GM10248 (cell line): ENCODE measurements at regions of chrX and their contacts with region 1.

Region 1: GRCh38 chrX:119488749-119489148 is 20.5 kb downstream of the SLC25A5 start:
- DNase-seq: peak; percentile 34
- CTCF ChIP-seq: peak; percentile 44

Region 2: GRCh38 chrX:119468930-119469635 is 19.7 kb before region 1 on chrX:
- CTCF ChIA-PET with region 1: interaction called, 14 read pairs
- POLR2A ChIA-PET with region 1: no interaction called
- DNase-seq: peak; percentile 79
- CTCF ChIP-seq: peak; percentile 78

Region 3: DNA sequence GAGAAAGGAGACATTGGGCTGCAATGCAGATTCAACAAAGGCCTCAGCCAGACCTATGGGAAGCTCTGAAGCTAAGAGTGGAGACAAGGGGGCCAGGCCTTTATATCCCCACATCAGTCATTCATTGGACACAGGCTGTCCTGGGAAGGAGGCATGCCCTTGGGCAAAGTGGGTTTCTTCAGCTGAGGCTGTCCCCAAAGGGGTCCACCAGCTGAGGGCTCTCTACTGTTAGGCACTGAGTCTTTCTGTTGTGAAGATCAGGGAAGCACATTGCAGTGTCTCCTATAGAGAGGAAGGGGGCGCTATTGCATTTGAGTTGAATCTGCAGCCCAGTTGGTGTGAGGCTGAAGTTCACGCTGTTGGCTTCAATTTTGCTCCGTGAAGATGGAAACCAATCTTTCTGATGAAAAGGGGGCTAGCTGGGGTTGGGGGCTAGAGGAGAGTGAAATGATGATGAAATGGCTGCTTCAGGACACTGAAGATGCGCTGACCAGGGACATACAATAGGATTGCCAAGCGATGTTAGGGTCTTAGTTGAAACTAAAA is 27.5 kb after region 1 on chrX:
- CTCF ChIA-PET with region 1: interaction called, 12 read pairs
- POLR2A ChIA-PET with region 1: no interaction called
- DNase-seq: peak; percentile 80
- CTCF ChIP-seq: peak; percentile 55

Region 4: GRCh38 chrX:119655125-119655524 is 166.4 kb after region 1 on chrX:
- CTCF ChIA-PET with region 1: no interaction called
- POLR2A ChIA-PET with region 1: no interaction called
- DNase-seq: peak; percentile 31
- CTCF ChIP-seq: no peak